ENCODE measurements at regions of chr2 and their contacts with region 1.

Region 1: DNA sequence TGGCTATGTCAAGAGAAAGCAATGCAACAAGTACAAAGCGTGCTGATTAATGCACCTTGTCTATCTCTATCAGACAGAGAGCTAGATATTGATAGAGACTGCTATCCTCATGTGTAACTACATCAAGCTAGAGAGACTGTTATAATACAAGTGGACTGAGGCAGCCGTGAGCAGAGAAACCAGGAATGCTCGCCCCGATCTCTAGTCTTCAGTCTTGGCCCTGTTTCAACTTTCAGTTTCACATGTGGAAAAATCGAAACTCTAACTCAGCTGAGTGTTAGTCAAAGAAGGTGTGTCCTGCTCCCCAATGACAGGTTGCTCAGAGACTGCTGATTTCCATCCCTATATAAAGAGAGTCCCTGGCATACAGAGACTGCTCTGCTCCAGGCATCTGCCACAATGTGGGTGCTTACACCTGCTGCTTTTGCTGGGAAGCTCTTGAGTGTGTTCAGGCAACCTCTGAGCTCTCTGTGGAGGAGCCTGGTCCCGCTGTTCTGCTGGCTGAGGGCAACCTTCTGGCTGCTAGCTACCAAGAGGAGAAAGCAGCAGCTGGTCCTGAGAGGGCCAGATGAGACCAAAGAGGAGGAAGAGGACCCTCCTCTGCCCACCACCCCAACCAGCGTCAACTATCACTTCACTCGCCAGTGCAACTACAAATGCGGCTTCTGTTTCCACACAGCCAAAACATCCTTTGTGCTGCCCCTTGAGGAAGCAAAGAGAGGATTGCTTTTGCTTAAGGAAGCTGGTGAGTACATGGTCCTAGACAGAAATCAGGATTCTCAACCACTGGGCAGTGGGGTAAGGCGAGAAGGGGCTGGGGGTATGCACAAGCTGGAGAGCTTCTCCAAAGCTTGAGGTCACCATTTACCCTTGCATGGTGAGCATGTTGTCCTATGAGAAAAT is at the start of gene RSAD2:
- DNase-seq: peak; percentile 71
- ATAC-seq: peak; percentile 85
- H3K4me3 Mint-ChIP-seq: peak within 1 kb of the TSS; percentile 94
- H3K27ac Mint-ChIP-seq: peak within 1 kb of the TSS; percentile 94
- H3K4me1 Mint-ChIP-seq: peaks cover 57% of the 10 kb centered on the region
- H3K27me3 Mint-ChIP-seq: no peaks in the 10 kb centered on the region
- total RNA-seq, gene RSAD2: 72.4 to 74.5 TPM

Region 2: DNA sequence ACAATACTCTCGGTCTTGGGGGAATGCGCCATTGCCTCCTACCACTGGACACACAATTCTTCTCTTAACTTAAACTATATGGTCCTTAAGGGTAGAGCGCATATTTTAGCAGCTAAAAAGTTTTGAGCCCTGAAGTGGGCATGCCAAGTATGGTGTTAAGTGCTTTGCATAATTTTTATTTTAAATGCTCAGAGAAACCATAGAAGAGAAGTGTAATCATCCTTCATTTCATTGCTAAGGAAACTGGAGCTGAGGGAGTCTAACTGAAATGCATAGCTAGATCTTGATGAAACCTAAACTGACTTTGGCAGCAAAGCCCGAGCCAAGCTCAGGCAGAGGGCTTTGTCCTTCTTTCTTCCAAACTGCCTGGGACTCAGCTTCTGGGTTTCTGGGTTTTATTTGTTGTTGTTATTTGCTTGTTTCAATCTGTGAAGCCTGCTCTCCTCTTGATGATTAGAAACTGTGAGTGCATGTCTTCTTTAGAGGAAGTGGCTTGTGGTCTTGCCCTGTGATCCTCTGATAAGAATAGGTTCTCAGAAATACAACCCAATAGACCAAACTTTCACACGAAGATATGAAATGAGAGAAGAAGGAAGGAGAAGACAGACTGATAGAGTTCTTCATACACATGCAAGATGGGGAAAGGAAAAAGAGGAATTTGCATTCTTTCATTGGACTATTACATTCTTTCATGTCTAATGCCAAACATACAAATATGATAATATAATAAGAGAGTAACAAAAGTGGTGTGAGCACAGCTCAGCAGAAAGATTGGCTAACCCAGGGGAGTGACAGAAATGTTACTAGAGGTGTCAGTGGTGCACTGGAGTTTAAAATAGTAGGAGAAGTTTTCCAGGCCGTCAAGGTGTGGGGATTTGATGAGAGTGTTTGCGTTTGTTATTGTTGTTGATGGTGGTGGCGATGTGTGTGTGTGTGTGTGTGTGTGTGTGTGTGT is 32.1 kb after region 1 on chr2:
- CTCF ChIA-PET with region 1: interaction called, 66 read pairs
- POLR2A ChIA-PET with region 1: interaction called, 121 read pairs
- DNase-seq: peak; percentile 87
- ATAC-seq: peak; percentile 76
- H3K4me3 Mint-ChIP-seq: peak overlapping the region; percentile 41
- H3K27ac Mint-ChIP-seq: peak overlapping the region; percentile 93
- H3K4me1 Mint-ChIP-seq: peaks cover 89% of the 10 kb centered on the region
- H3K27me3 Mint-ChIP-seq: no peaks in the 10 kb centered on the region

Region 3: GRCh38 chr2:6917071-6917760 is 39.6 kb after region 1 on chr2 and contains the start of gene RNF144A:
- CTCF ChIA-PET with region 1: interaction called, 66 read pairs
- POLR2A ChIA-PET with region 1: interaction called, 121 read pairs
- DNase-seq: peak; percentile 72
- ATAC-seq: peak; percentile 80
- H3K4me3 Mint-ChIP-seq: peak within 1 kb of the TSS; percentile 85
- H3K27ac Mint-ChIP-seq: peak within 1 kb of the TSS; percentile 86
- H3K4me1 Mint-ChIP-seq: peaks cover 77% of the 10 kb centered on the region
- H3K27me3 Mint-ChIP-seq: no peaks in the 10 kb centered on the region
- total RNA-seq, gene RNF144A: 76.9 to 87.0 TPM

Measured in activated CD8-positive, alpha-beta T cell treated with anti-CD3 and anti-CD28 coated beads, Interleukin-2, amount 10 ng/mL, durations not matched to agents 7 days and 5 days (primary cell).